ENCODE measurements at regions of chr11 and their contacts with region 1.

Region 1: DNA sequence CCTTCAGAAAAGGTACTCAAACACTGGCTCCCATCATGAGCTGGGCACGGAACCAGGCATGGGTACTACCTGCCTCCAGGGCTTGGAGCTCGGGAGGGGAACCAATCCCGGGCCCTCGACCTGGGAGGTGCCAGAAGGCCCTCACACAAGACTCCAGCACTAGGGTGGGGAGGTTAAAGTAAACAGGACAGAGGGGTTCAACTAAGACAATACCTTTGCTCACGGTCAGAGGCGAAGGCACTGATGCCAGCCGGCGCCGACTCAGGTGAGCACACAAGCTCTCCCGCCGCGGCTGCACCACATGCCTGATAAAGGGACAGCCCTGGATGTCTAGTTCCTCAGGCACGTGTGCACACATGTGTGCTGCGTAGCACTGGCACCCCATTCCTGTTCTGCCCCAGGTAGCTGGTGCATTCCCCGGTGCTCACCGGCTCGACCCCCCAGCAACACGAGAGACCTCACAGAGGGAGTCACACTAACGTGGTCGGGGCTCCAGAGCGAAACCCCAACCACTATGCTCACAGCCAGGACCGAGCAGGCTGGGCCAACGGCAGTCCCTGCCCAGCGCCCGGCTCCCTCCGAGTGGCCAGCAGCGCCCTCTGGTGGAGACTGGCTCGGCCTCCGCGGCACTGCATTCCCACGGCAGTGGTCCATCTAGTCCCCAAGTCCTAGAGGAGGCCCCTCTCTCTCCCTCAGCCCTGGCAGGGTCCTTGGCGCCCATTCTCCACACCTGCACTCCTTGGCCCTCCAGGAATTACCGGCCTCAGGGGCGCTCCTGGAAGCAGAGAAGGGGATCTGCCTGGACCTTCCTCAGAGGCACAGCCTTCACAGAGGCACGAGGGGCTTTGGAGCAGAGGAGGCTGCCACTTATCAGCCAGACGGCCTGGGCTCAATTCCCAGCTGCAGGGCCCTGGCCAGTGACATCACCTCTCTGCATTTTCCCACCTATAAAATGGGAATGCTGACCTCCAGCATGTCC is 28.8 kb upstream of the MOB2 start:
- DNase-seq: no peak
- H3K4me3 ChIP-seq: no peak overlapping the region
- CTCF ChIP-seq: peak; percentile 99

Region 2: DNA sequence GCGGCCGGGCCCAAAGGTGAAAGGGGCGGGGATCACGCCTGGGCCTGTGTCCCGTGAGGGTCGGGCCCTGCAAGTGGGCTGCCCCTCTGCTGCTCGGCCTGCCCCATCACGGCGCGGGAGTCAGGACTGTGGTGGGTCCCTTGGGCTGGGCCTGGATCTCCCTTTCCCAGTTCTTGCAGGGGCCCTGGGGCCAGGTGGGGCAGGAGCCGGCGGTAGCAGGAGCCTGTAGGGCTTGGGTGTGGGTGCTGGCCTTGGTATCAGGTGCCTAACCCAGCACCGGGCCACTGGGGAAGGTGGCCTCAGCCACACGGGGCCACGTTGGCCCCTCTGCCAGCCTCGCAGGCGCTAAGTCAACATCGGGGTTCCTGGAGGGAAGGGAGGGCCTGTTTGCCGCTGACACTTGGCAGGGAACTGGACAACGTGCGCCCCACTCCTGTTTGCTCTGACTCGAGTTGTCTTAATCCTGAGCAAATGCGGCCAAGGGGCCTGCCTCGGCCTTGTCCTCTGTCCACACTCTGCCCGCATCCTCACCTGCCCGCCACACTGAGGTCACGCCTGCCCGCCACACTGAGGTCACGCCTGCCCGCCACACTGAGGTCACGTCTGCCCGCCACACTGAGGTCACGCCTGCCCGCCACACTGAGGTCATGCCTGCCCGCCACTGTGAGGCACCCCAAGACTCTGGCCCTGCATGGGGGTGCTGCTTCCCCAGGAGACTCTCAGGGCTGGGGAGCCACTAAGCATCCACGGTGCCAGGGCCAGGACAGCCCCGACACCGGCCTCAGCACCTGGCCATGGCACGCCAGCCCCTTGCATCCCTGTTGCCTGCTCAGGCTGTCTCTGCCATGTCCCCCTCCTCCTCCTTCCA is 306.7 kb before region 1 on chr11:
- CTCF ChIA-PET with region 1: interaction called, 40 read pairs
- POLR2A ChIA-PET with region 1: no interaction called
- DNase-seq: no peak
- H3K4me3 ChIP-seq: no peak overlapping the region
- CTCF ChIP-seq: no peak

Region 3: GRCh38 chr11:1267441-1268100 is 247.8 kb before region 1 on chr11:
- CTCF ChIA-PET with region 1: interaction called, 17 read pairs
- POLR2A ChIA-PET with region 1: no interaction called
- DNase-seq: no peak
- H3K4me3 ChIP-seq: no peak overlapping the region
- CTCF ChIP-seq: no peak

Region 4: GRCh38 chr11:1532014-1532586 is 16.7 kb after region 1 on chr11:
- CTCF ChIA-PET with region 1: interaction called, 40 read pairs
- POLR2A ChIA-PET with region 1: no interaction called
- DNase-seq: no peak
- H3K4me3 ChIP-seq: no peak overlapping the region
- CTCF ChIP-seq: no peak

Region 5: DNA sequence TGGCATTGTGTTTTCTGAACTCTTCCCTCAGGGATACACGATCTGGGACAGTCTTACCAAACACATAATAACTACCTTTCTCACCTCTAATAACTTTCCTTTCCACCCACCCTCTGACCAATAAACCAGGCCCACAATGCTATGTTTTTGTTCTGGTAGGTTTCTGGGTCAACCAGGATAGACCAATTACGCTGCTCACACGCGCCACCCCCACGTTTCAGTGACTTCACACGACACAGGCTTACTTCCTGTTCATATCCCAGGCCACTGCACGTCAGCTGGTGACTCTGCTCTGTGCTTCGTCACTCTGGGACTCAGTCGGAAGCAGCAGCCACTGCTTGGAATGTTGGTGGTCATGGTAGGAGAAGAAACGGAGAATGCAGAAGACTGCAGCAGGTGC is 104.1 kb after region 1 on chr11:
- CTCF ChIA-PET with region 1: no interaction called
- POLR2A ChIA-PET with region 1: no interaction called
- DNase-seq: no peak
- H3K4me3 ChIP-seq: no peak overlapping the region
- CTCF ChIP-seq: no peak